Activated T-helper 2 cell treated with anti-CD3 and anti-CD28 coated beads, Interferon-gamma antibody, Interleukin-2, Interleukin-4, amounts not matched to agents 10 μg/mL and 5 μg/mL and 100 μg/mL, durations not matched to agents 14 hours and 24 hours and 36 hours (primary cell): ENCODE measurements at regions of chr1 and their contacts with region 1.

Region 1: GRCh38 chr1:157992031-157992832 is 1.2 kb upstream of the KIRREL1 start:
- DNase-seq: no peak
- H3K4me3 Mint-ChIP-seq: no peak overlapping the region
- H3K27ac Mint-ChIP-seq: no peak overlapping the region
- H3K4me1 Mint-ChIP-seq: peaks cover 2% of the 10 kb centered on the region
- H3K27me3 Mint-ChIP-seq: peaks cover 36% of the 10 kb centered on the region

Region 2: GRCh38 chr1:158035976-158036583 is 43.8 kb after region 1 on chr1:
- intact Hi-C with region 1: loop called (anchors 1 kb)
- DNase-seq: no peak
- H3K4me3 Mint-ChIP-seq: no peak overlapping the region
- H3K27ac Mint-ChIP-seq: no peak overlapping the region
- H3K4me1 Mint-ChIP-seq: no peaks in the 10 kb centered on the region
- H3K27me3 Mint-ChIP-seq: no peaks in the 10 kb centered on the region

Region 3: GRCh38 chr1:158087320-158087927 is 95.2 kb after region 1 on chr1:
- intact Hi-C with region 1: loop called (anchors 2 kb)
- DNase-seq: no peak
- H3K4me3 Mint-ChIP-seq: no peak overlapping the region
- H3K27ac Mint-ChIP-seq: no peak overlapping the region
- H3K4me1 Mint-ChIP-seq: no peaks in the 10 kb centered on the region
- H3K27me3 Mint-ChIP-seq: no peaks in the 10 kb centered on the region

Region 4: GRCh38 chr1:158124999-158125398 is 132.8 kb after region 1 on chr1:
- intact Hi-C with region 1: loop called (anchors 1 kb)
- DNase-seq: peak; percentile 49
- H3K4me3 Mint-ChIP-seq: no peak overlapping the region
- H3K27ac Mint-ChIP-seq: no peak overlapping the region
- H3K4me1 Mint-ChIP-seq: peaks cover 10% of the 10 kb centered on the region
- H3K27me3 Mint-ChIP-seq: peaks cover 28% of the 10 kb centered on the region